Activated T-helper 1 cell treated with anti-CD3 and anti-CD28 coated beads, Interleukin-12 subunit alpha, Interleukin-12 subunit beta, Interleukin-2, Interleukin-4 antibody, amounts not matched to agents 30 ng/mL and 10 ng/mL and 1 ng/mL, durations not matched to agents 14 hours and 24 hours and 36 hours (primary cell): ENCODE measurements at regions of chr4 and their contacts with region 1.

Region 1: GRCh38 chr4:122764821-122765215 is 32.3 kb downstream of the BBS12 start:
- DNase-seq: no peak
- H3K4me3 Mint-ChIP-seq: peak overlapping the region; percentile 43
- H3K27ac Mint-ChIP-seq: peak overlapping the region; percentile 79
- H3K4me1 Mint-ChIP-seq: peaks cover 45% of the 10 kb centered on the region
- H3K27me3 Mint-ChIP-seq: no peaks in the 10 kb centered on the region

Region 2: DNA sequence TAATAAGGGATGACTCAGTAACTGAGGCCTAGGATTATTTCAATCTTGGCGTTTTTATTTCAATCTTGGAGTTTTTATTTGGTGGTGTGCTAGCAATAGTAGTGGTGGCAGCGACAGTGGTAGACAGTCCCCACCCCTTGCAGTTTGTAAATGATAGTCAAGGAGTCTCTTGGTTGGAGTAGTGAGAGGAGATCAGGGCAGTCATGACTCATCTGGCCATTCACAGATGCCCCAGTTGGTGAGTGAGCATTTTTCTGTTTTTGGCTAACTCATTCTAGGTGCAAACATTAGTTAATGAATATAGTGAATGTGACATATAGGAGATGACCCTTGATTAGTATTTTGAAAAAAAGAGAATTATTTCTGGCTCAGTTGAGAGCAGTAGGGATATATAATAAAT is 479.5 kb before region 1 on chr4:
- intact Hi-C with region 1: no loop called
- DNase-seq: no peak
- H3K4me3 Mint-ChIP-seq: no peak overlapping the region
- H3K27ac Mint-ChIP-seq: no peak overlapping the region
- H3K4me1 Mint-ChIP-seq: no peaks in the 10 kb centered on the region
- H3K27me3 Mint-ChIP-seq: no peaks in the 10 kb centered on the region

Region 3: DNA sequence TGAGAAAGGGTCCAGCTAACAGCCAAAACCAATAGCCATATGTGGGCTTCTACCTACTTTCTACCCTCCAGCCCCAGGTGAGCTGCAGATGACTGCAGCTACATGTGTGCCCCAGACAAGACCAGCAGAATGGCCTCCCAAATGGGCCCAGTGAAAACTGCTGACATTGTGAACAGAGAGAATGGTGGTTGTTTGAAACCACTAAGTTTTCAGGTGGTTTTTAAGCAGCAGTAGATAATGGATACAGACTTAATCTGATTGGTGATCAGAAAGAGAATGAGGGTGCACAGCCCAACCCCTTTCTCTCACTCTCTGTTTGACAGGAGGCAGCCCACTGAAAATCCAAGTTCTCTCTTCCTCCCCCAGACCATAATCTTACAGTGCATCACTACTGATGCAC is 74.8 kb before region 1 on chr4:
- intact Hi-C with region 1: loop called (anchors 2 kb)
- DNase-seq: peak; percentile 22
- H3K4me3 Mint-ChIP-seq: peak overlapping the region; percentile 43
- H3K27ac Mint-ChIP-seq: peak overlapping the region; percentile 71
- H3K4me1 Mint-ChIP-seq: peaks cover 66% of the 10 kb centered on the region
- H3K27me3 Mint-ChIP-seq: no peaks in the 10 kb centered on the region

Region 4: DNA sequence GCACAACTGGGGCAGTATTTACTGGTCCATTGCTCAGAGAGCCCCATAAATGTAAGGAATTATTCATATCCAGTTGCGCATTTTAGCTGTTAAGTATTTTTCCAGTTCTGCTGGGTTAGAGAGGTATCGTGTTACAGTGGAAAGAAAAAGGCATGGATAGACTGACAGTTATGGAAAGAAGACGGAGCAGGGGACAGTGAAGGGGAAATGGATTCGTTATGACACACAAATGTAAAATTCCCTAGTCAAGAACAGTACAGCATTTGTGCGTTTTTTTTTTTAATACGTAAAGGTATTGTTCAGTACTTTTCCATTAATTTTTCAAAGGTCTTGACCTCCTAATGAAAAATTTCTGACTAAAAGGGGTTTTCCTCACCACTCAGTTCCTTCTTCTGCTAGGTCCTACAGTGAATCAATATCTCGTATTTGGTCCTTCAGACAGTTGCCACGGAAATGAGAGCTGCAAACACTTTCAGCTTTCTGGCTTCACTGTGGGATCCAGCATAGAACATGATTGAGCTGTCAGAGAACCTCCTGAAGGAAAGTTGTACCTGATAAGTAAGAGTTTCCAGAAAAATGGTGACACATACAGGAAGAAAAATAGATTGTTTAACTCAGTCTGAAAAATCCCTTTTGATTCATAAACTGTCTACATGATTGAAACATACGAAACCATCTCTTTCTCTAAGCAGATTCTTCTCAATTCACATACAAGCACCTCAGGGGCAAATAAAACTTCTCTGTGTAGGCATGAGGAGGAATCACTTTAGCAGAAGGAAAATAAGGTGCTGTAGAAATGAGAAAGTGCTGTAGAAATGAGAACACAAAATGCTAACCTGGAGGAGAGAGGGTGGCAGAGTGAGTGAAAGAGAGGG is 54.1 kb before region 1 on chr4:
- intact Hi-C with region 1: loop called (anchors 2 kb)
- DNase-seq: peak; percentile 31
- H3K4me3 Mint-ChIP-seq: peak overlapping the region; percentile 67
- H3K27ac Mint-ChIP-seq: peak overlapping the region; percentile 97
- H3K4me1 Mint-ChIP-seq: peaks cover 83% of the 10 kb centered on the region
- H3K27me3 Mint-ChIP-seq: peaks cover 2% of the 10 kb centered on the region

Region 5: GRCh38 chr4:122747883-122748282 is 16.9 kb before region 1 on chr4:
- intact Hi-C with region 1: loop called (anchors 1 kb)
- DNase-seq: no peak
- H3K4me3 Mint-ChIP-seq: no peak overlapping the region
- H3K27ac Mint-ChIP-seq: no peak overlapping the region
- H3K4me1 Mint-ChIP-seq: peaks cover 35% of the 10 kb centered on the region
- H3K27me3 Mint-ChIP-seq: peaks cover 5% of the 10 kb centered on the region

Region 6: GRCh38 chr4:122814426-122814825 is 49.6 kb after region 1 on chr4:
- intact Hi-C with region 1: loop called (anchors 1 kb)
- DNase-seq: no peak
- H3K4me3 Mint-ChIP-seq: no peak overlapping the region
- H3K27ac Mint-ChIP-seq: peak overlapping the region; percentile 38
- H3K4me1 Mint-ChIP-seq: peaks cover 12% of the 10 kb centered on the region
- H3K27me3 Mint-ChIP-seq: peaks cover 16% of the 10 kb centered on the region

Region 7: GRCh38 chr4:123096038-123096437 is 331.2 kb after region 1 on chr4:
- intact Hi-C with region 1: loop called (anchors 5 kb)
- DNase-seq: no peak
- H3K4me3 Mint-ChIP-seq: no peak overlapping the region
- H3K27ac Mint-ChIP-seq: no peak overlapping the region
- H3K4me1 Mint-ChIP-seq: peaks cover 5% of the 10 kb centered on the region
- H3K27me3 Mint-ChIP-seq: no peaks in the 10 kb centered on the region

Region 8: GRCh38 chr4:124596816-124597215 is 1832.0 kb after region 1 on chr4:
- intact Hi-C with region 1: no loop called
- DNase-seq: no peak
- H3K4me3 Mint-ChIP-seq: no peak overlapping the region
- H3K27ac Mint-ChIP-seq: no peak overlapping the region
- H3K4me1 Mint-ChIP-seq: no peaks in the 10 kb centered on the region
- H3K27me3 Mint-ChIP-seq: no peaks in the 10 kb centered on the region